A549 (cell line): ENCODE measurements at regions of chr6 and their contacts with region 1.

Region 1: DNA sequence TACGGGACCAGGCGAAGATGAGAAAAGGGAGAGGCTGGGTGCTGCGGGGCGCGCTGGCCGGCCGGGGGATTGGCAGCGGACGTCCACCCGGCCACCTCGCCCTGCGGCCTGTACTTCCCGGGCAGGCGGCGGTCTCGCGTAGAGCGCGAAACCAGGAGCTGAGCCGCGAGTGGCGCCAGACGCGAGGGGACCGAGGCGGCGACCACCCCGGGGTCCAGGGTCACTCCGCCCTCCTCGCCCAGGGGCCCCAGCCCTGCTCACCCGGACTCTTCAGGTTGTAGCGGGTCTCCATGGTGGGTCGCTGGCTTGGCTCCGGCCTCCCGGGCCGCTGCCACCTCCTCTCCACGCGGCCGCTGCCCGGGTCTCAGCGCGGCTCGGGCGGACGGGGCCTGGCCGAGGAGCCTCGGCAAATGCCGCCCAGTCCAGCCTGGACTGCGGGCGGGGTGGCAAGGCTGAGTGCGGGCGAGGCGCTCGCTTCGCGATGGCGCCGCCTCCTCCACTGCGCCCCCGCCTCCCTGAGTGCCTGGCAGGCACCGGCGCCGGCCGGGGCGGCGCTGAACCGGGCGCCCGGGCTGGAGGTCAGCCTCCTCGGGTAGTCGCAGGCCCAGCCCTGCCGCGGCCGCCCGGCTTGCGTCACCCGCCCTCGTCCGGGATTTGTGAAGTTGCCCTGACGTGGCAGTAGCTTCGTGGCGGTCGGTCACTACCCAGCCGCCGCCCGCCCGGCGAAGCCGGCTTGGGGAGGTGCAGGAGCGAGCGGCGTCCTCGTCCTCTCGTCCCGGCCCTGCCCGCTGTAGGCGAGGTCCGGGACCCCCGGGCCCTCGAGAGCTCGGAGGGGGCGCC is at the start of gene UBE2J1:
- DNase-seq: peak; percentile 48 to 86
- ATAC-seq: peak; percentile 96 to 98
- H3K4me3 ChIP-seq: peak within 1 kb of the TSS; percentile 72
- H3K27ac ChIP-seq: peak within 1 kb of the TSS; percentile 94 to 98
- H3K4me1 ChIP-seq: peaks cover 15% of the 10 kb centered on the region; the same call in 1 of the 3 replicates
- CTCF ChIP-seq: no peak
- EP300 ChIP-seq: no peak
- POLR2A ChIP-seq: peak; percentile 59
- RAD21 ChIP-seq: no peak
- polyA plus RNA-seq, gene UBE2J1: 26.6 and 32.7 TPM in 2 replicates

Region 2: DNA sequence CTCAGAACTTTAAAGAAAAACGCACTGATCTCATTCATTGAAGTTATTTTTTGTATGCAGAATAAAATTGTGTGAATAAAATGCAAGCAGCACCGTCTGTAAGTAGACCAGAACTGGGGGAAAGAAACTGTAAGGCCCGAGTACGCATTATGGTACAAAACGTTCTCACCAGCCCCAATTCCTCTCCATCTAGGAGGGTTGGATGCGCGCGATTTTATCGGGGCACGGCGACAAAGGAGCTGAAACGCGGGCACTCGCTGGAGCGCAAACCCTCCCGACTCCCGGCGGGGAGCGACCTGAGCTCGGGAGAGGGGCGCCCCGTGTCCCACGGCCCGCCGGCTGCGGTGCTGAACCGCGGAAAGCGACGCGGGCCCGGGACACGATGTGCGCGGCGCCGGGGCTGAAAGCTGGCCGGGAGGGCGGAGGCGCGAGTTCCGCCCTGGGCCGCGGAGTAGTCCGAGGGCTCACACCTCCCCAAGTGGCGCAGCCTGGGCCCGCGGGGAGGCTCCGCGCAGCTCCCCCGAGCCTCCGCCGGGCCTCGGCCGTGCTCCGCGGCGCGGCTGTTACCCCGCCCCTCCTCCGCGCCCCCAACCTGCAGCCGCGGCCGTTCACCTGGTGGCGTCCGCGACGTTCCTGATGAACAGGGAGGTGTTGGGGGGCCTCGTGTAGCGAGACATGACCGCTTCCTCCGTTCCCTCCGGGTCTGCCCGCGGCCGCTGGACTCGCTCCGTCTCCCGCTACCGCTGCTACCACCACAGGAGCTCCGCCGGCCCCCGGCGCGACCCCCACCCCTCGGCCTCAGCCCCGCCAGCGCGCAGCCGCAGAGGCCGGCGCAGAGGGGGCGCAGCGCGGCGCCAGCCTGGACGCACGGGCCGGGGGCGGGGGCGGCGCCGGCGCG is 235.0 kb before region 1 on chr6 and contains the start of gene SRSF12:
- CTCF ChIA-PET with region 1: no interaction called
- POLR2A ChIA-PET with region 1: interaction called, 13 read pairs
- DNase-seq: peak; percentile 34 to 50
- ATAC-seq: peak; percentile 91 to 95
- H3K4me3 ChIP-seq: peak within 1 kb of the TSS; percentile 71
- H3K27ac ChIP-seq: peak within 1 kb of the TSS; percentile 87 to 89
- H3K4me1 ChIP-seq: peaks cover 23% of the 10 kb centered on the region; the same call in 2 of the 3 replicates
- CTCF ChIP-seq: no peak
- EP300 ChIP-seq: no peak
- POLR2A ChIP-seq: no peak
- RAD21 ChIP-seq: no peak; a peak in 1 of 5 replicates
- polyA plus RNA-seq, gene SRSF12: 1.9 and 2.7 TPM in 2 replicates